GM13977 (cell line): ENCODE measurements at regions of chr13 and their contacts with region 1.

Region 1: DNA sequence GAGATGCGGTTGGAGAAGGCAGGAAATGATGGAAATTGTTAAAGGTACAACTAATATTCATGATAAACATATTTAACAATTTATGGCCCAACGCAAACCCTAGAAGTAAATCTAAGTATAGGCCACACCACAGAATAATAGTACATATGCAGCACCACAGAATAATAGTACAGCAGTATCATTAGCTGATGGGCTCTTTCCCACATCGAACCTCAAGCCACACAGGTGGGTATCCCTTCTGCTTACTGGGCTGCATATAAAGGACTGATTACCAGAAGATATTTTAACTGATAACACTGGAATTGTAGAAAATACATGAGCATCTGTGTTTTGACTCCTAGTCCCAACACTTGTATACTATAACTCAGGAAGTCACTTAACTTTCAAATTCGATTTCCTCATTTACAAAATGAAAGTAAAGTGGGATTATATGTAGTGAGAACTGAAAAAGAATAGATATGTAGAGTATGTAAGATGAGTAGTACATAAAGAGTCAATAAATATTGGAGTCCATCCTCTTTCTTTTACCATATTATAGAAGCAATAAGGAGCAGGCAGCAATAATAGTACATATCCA is 91.5 kb downstream of the TSC22D1 start:
- DNase-seq: peak; percentile 10
- CTCF ChIP-seq: no peak

Region 2: GRCh38 chr13:44969551-44970484 is 485.2 kb after region 1 on chr13:
- in situ Hi-C with region 1: loop called (anchors 10 kb)
- DNase-seq: peak; percentile 20
- CTCF ChIP-seq: peak; percentile 69